Esophagus muscularis mucosa (tissue), 4 donors: ENCODE measurements at regions of chr18 and their contacts with region 1.

Region 1: GRCh38 chr18:63518178-63519012 is 23.8 kb upstream of the SERPINB12 start:
- DNase-seq: no peak
- H3K4me3 ChIP-seq: no peak overlapping the region
- H3K27ac ChIP-seq: no peak overlapping the region
- H3K4me1 ChIP-seq: peaks cover 0 to 4% (median 0%) of the 10 kb centered on the region in 4 donors
- H3K27me3 ChIP-seq: peaks cover 0 to 10% (median 0%) of the 10 kb centered on the region in 4 donors
- CTCF ChIP-seq: peak; percentile 68 to 73 (median 72)
- EP300 ChIP-seq: no peak
- POLR2A ChIP-seq: no peak

Region 2: GRCh38 chr18:63578357-63578958 is 60.1 kb after region 1 on chr18:
- intact Hi-C with region 1: loop called (anchors 5 kb)
- DNase-seq: no peak
- H3K4me3 ChIP-seq: no peak overlapping the region
- H3K27ac ChIP-seq: no peak overlapping the region
- H3K4me1 ChIP-seq: no peaks in the 10 kb centered on the region
- H3K27me3 ChIP-seq: no peaks in the 10 kb centered on the region
- CTCF ChIP-seq: peak; percentile 46 to 53 (median 53)
- EP300 ChIP-seq: no peak
- POLR2A ChIP-seq: no peak

Region 3: DNA sequence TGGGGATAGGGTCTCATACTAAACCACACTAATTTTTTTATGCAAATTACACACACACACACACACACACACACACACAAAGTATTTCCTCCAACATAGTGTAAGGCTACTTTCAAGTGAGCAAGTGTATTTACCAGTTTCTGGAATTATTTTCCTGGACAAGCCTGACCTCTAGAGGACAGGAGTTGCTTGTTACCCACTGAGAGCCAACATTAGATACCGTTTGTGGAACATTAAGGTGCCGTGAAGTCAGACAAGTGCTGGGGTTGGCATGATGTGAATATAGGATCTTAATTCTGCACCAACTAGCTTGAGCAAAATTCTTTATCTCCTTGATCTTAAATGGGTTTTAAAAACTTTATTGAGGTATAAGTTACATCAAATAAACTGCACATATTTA is 329.8 kb after region 1 on chr18:
- intact Hi-C with region 1: loop called (anchors 10 kb)
- DNase-seq: no peak
- H3K4me3 ChIP-seq: no peak overlapping the region
- H3K27ac ChIP-seq: no peak overlapping the region
- H3K4me1 ChIP-seq: no peaks in the 10 kb centered on the region
- H3K27me3 ChIP-seq: peaks cover 0 to 6% (median 0%) of the 10 kb centered on the region in 4 donors
- CTCF ChIP-seq: peak; percentile 19 to 35 (median 22)
- EP300 ChIP-seq: no peak
- POLR2A ChIP-seq: no peak

Region 4: GRCh38 chr18:63936156-63936931 is 417.9 kb after region 1 on chr18:
- intact Hi-C with region 1: loop called (anchors 2 kb)
- DNase-seq: peak; percentile 94
- H3K4me3 ChIP-seq: peak overlapping the region; percentile 54 to 60 (median 54)
- H3K27ac ChIP-seq: no peak overlapping the region
- H3K4me1 ChIP-seq: peaks cover 5 to 12% (median 11%) of the 10 kb centered on the region in 4 donors
- H3K27me3 ChIP-seq: peaks cover 0 to 41% (median 2%) of the 10 kb centered on the region in 4 donors
- CTCF ChIP-seq: peak; percentile 62 to 72 (median 67)
- EP300 ChIP-seq: no peak
- POLR2A ChIP-seq: no peak

Region 5: DNA sequence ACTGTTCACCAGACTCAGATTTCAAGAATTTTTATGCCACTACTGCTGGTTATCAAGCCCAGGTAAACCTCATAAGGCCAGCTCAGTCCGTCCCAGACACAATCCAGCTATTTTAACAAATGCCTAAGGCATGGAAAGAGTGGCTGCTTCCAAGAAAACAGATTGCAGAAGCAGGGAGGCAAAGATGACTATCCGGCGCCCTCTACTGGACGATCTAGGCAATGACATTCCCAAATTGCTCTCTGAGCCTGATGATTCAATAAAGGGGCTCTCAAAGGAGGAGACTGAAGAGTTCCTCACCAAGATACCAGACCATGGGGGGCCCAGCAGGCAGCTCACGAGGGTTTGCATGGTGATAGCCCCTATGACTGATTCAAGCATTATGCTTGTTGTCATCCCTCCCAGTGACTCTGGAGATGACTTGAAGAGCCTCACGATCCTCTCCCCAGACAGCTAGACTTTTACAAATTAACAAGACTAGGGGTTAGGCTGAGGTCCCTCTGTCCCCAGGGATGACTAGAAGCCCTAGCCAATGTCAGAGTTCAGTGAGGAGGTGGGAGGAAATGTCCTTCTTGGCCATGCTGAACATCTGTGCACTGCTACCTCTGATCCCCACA is 476.5 kb after region 1 on chr18:
- intact Hi-C with region 1: loop called (anchors 5 kb)
- DNase-seq: no peak
- H3K4me3 ChIP-seq: no peak overlapping the region
- H3K27ac ChIP-seq: no peak overlapping the region
- H3K4me1 ChIP-seq: peaks cover 0 to 5% (median 2%) of the 10 kb centered on the region in 4 donors
- H3K27me3 ChIP-seq: peaks cover 0 to 4% (median 0%) of the 10 kb centered on the region in 4 donors
- CTCF ChIP-seq: peak; percentile 75 to 95 (median 87)
- EP300 ChIP-seq: no peak
- POLR2A ChIP-seq: no peak